Activated T-helper 1 cell treated with anti-CD3 and anti-CD28 coated beads, Interleukin-12 subunit alpha, Interleukin-12 subunit beta, Interleukin-2, Interleukin-4 antibody, amounts not matched to agents 30 ng/mL and 10 ng/mL and 1 ng/mL, durations not matched to agents 14 hours and 24 hours and 36 hours (primary cell): ENCODE measurements at regions of chr5 and their contacts with region 1.

Region 1: GRCh38 chr5:150560401-150561193 is 52.7 kb downstream of the NDST1 start:
- DNase-seq: peak; percentile 71
- H3K4me3 Mint-ChIP-seq: no peak overlapping the region
- H3K27ac Mint-ChIP-seq: no peak overlapping the region
- H3K4me1 Mint-ChIP-seq: no peaks in the 10 kb centered on the region
- H3K27me3 Mint-ChIP-seq: peaks cover 7% of the 10 kb centered on the region

Region 2: GRCh38 chr5:150350524-150351344 is 209.9 kb before region 1 on chr5:
- intact Hi-C with region 1: no loop called
- DNase-seq: peak; percentile 33
- H3K4me3 Mint-ChIP-seq: peak overlapping the region; percentile 17
- H3K27ac Mint-ChIP-seq: peak overlapping the region; percentile 42
- H3K4me1 Mint-ChIP-seq: peaks cover 9% of the 10 kb centered on the region
- H3K27me3 Mint-ChIP-seq: peaks cover 5% of the 10 kb centered on the region

Region 3: GRCh38 chr5:150656191-150657132 is 95.9 kb after region 1 on chr5:
- intact Hi-C with region 1: loop called (anchors 1 kb)
- DNase-seq: peak; percentile 74
- H3K4me3 Mint-ChIP-seq: peak overlapping the region; percentile 64
- H3K27ac Mint-ChIP-seq: no peak overlapping the region
- H3K4me1 Mint-ChIP-seq: peaks cover 7% of the 10 kb centered on the region
- H3K27me3 Mint-ChIP-seq: peaks cover 21% of the 10 kb centered on the region

Region 4: DNA sequence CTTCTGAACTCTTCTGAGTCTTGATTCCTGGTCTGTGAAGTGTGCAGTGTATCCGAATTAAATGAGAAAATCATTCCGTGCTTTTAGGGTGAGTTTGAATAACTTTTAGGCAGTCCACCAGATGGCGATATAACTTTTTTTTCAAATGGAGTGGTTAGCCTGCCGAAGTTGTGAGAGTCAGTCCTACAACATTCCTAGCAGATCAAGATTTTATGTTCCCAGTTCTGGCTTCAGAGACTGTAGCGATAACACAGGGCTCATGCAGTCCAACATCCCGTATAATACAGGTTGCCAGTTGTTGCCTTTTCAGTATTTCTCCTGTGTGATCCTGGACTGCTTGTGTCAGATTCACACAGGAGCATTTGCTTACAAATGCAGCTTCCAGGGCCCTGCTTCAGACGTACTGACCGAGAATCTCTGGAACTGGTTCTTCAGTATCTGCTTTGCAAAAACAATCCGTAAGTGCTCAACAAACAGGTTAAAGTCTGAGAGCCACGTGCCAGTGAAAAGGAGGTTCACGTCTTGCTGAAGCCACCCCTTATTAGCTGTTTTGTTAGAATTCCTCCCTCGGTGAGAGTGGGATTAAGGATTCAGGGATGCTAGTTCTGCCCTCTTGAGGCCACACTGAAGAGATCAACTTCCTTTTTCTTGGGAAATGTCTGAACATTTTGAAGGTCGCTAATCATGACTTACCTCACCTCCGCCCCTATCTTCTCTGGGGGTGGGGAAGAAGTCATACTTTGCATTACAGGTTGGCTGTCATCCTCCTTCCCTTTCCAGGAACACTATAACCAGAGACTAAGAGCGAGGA is 240.7 kb after region 1 on chr5:
- intact Hi-C with region 1: loop called (anchors 1 kb)
- DNase-seq: no peak
- H3K4me3 Mint-ChIP-seq: no peak overlapping the region
- H3K27ac Mint-ChIP-seq: no peak overlapping the region
- H3K4me1 Mint-ChIP-seq: peaks cover 20% of the 10 kb centered on the region
- H3K27me3 Mint-ChIP-seq: peaks cover 3% of the 10 kb centered on the region